HAP-1 (cell line): ENCODE measurements at regions of chr11 and their contacts with region 1.

Region 1: GRCh38 chr11:1917671-1918516 is 1.6 kb upstream of the TNNT3 start:
- DNase-seq: no peak
- H3K4me3 ChIP-seq: no peak overlapping the region
- H3K4me1 ChIP-seq: no peaks in the 10 kb centered on the region
- H3K27me3 ChIP-seq: no peaks in the 10 kb centered on the region

Region 2: GRCh38 chr11:1882519-1883238 is 35.2 kb before region 1 on chr11:
- in situ Hi-C with region 1: loop called (anchors 5 kb)
- DNase-seq: peak; percentile 65 to 92
- H3K4me3 ChIP-seq: no peak overlapping the region
- H3K4me1 ChIP-seq: no peaks in the 10 kb centered on the region
- H3K27me3 ChIP-seq: peaks cover 9% of the 10 kb centered on the region; the same call in 1 of the 2 replicates